ENCODE measurements at regions of chr10 and their contacts with region 1.

Region 1: DNA sequence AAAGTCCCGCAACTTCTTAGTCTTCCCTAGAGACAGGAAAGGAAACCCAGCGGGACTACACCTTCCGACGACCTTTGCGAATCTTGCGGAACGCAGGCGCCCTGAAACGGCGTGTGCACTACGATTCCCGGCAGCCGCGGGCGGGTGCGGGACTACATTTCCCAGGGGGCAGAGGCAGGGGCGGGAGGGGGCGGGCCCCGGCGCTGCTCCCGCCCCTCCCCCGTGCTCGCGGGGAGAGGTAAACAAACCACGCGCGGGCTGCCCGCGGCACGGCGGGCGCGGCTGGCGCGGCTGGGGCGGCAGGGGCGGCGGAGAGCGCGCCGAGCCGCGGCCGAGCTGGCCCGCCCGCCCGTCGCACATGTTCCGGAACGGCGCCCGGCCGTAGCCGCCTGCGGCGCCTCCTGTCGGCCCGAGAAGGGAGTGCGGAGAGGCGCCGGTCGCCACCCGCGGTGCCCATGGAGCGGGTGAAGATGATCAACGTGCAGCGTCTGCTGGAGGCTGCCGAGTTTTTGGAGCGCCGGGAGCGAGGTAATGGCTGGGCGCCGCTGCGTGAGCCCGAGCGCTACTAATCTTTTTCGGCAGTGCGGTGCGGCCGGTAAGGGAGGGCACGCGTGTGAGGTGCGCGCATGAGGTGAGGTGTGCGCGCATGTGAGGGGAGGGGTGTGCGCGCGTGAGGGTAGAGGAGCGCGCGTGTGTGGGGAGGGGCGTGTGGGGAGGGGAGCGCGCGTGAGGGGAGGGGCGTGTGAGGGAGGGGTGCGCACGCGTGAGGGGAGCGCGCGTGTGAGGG is 18.5 kb downstream of the MXI1 start:
- DNase-seq: peak; percentile 79 to 95
- ATAC-seq: peak; percentile 70 to 87 (median 77)
- H3K4me3 ChIP-seq: peak overlapping the region; percentile 66
- H3K4me3 Mint-ChIP-seq: peak overlapping the region; percentile 96
- H3K27ac ChIP-seq: peak overlapping the region; percentile 60
- H3K27ac Mint-ChIP-seq: peak overlapping the region; percentile 84
- H3K4me1 ChIP-seq: peaks cover 16% of the 10 kb centered on the region
- H3K4me1 Mint-ChIP-seq: peaks cover 25 to 31% of the 10 kb centered on the region in 2 donors
- H3K27me3 ChIP-seq: peaks cover 6% of the 10 kb centered on the region
- H3K27me3 Mint-ChIP-seq: peaks cover 22 to 33% of the 10 kb centered on the region in 2 donors
- CTCF ChIP-seq: peak; percentile 51

Region 2: DNA sequence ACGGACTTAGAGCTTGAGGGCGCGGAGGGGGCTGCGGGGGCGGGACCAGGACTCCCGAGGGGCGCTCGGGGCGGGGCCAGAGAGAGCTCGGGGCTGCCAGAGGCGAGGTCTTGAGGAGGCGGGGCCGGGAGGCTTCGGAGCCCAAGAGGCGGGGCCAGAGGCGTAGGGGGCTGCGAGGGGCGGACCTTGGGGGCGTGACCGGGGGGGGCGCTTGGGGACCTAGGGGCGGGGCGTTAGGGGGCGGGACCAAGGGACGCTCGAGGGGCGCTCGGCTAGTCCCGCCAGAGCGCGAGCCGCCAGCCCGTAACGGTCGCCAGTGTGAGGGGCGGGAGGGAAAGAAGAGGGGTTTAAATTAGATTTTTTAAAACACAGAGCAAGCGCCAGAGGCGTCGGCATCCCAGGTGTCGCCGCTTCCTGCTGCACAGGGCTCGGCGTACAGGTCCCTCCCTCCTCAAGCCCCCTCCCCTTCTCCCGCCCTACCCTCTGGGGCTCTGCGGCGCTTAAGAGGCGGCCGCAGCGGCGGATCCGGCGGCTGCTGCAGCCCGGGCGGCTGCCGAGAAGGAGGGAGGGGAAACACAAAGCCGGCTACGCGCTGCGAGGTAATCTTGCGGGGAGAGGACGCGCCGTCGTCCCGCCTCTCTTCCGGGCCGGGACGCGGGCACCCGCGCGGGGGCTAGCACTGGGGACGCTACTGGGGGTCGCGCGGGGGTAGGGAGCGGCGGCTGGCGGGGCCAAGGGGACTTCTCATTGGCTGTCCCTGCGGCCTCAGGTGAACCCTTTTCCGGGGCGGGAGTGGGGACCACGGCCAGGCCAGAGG is 218.0 kb before region 1 on chr10 and contains the start of gene ADD3:
- intact Hi-C with region 1: loop called (anchors 10 kb)
- DNase-seq: peak; percentile 89 to 96
- ATAC-seq: peak; percentile 79 to 93 (median 79)
- H3K4me3 ChIP-seq: peak within 1 kb of the TSS; percentile 85
- H3K4me3 Mint-ChIP-seq: no peak within 1 kb of the TSS
- H3K27ac ChIP-seq: peak within 1 kb of the TSS; percentile 78
- H3K27ac Mint-ChIP-seq: peak within 1 kb of the TSS in 1 of 2 donors; percentile 97
- H3K4me1 ChIP-seq: peaks cover 19% of the 10 kb centered on the region
- H3K4me1 Mint-ChIP-seq: peaks cover 41 to 42% of the 10 kb centered on the region in 2 donors
- H3K27me3 ChIP-seq: no peaks in the 10 kb centered on the region
- H3K27me3 Mint-ChIP-seq: no peaks in the 10 kb centered on the region
- CTCF ChIP-seq: no peak
- total RNA-seq, gene ADD3: 341 to 437 (median 344) TPM

Region 3: DNA sequence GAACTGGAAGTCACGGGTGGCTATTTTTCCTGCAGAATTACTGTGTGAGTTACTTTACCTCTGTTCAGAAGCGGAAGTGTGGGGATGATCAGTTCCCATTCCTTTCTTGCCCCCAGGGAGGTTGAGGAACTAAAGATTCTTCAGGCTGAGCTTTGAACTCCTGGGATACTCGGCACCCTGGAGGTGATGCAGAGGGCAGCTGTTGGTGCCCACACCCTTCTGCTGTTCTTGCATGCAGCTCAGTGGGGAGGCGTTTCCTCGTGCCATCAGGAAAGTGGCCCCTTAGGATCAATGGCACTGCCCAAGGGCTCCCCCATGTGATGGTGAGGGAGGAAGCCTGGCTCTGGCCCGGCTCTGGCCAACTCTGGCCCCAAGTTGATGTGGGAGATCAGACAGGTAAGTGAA is 63.2 kb before region 1 on chr10:
- intact Hi-C with region 1: loop called (anchors 5 kb)
- DNase-seq: no peak
- ATAC-seq: no peak
- H3K4me3 ChIP-seq: no peak overlapping the region
- H3K4me3 Mint-ChIP-seq: no peak overlapping the region
- H3K27ac ChIP-seq: no peak overlapping the region
- H3K27ac Mint-ChIP-seq: no peak overlapping the region
- H3K4me1 ChIP-seq: peaks cover 13% of the 10 kb centered on the region
- H3K4me1 Mint-ChIP-seq: peaks cover 10 to 11% of the 10 kb centered on the region in 2 donors
- H3K27me3 ChIP-seq: peaks cover 79% of the 10 kb centered on the region
- H3K27me3 Mint-ChIP-seq: peaks cover 59 to 72% of the 10 kb centered on the region in 2 donors
- CTCF ChIP-seq: no peak

Region 4: GRCh38 chr10:110210674-110211464 is 15.1 kb before region 1 on chr10:
- intact Hi-C with region 1: loop called (anchors 1 kb)
- DNase-seq: peak; percentile 88 to 95
- ATAC-seq: peak; percentile 73 to 81 (median 78)
- H3K4me3 ChIP-seq: peak overlapping the region; percentile 57
- H3K4me3 Mint-ChIP-seq: peak overlapping the region; percentile 96
- H3K27ac ChIP-seq: peak overlapping the region; percentile 71
- H3K27ac Mint-ChIP-seq: peak overlapping the region; percentile 63 to 86
- H3K4me1 ChIP-seq: peaks cover 48% of the 10 kb centered on the region
- H3K4me1 Mint-ChIP-seq: peaks cover 54 to 61% of the 10 kb centered on the region in 2 donors
- H3K27me3 ChIP-seq: peaks cover 30% of the 10 kb centered on the region
- H3K27me3 Mint-ChIP-seq: peaks cover 58 to 75% of the 10 kb centered on the region in 2 donors
- CTCF ChIP-seq: no peak

Region 5: GRCh38 chr10:110260746-110261477 is 35.0 kb after region 1 on chr10:
- intact Hi-C with region 1: loop called (anchors 5 kb)
- DNase-seq: no peak
- ATAC-seq: no peak
- H3K4me3 ChIP-seq: no peak overlapping the region
- H3K4me3 Mint-ChIP-seq: no peak overlapping the region
- H3K27ac ChIP-seq: no peak overlapping the region
- H3K27ac Mint-ChIP-seq: no peak overlapping the region
- H3K4me1 ChIP-seq: no peaks in the 10 kb centered on the region
- H3K4me1 Mint-ChIP-seq: no peaks in the 10 kb centered on the region
- H3K27me3 ChIP-seq: no peaks in the 10 kb centered on the region
- H3K27me3 Mint-ChIP-seq: peaks cover 17 to 47% of the 10 kb centered on the region in 2 donors
- CTCF ChIP-seq: no peak

Region 6: DNA sequence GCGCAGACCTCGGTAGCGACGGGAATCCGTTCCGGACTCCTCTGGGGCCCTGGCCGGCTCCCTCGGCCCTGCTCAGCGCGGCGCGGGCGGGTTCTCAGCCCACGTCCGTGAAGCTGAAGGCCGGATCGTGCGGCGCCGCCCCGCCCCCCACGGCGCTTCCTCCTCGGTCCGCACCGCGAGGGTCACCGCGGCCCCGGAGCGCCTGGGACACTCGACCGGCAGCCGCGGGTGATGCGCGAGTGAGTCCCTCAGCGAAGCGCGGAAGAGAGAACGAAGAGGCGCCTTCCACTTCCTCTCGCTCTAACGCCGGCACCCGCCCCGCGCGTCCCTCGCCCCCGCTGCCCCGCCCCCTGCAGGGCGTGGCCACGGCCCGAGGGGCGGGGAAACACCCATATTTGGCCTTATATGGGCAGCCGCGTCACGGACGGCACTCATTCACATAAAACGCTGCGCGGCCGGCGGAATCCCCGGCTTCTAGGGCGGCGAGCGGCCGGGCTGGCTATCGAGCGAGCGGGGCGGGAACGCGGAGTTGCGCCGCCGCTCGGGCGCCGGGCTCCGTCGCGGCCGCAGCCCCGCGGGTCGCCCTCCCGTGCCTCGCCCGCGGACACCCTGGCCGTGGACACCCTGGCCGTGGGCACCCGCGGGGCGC is 271.6 kb after region 1 on chr10 and contains the start of gene DUSP5:
- intact Hi-C with region 1: loop called (anchors 5 kb)
- DNase-seq: peak; percentile 98 to 99
- ATAC-seq: peak; percentile 88 to 97 (median 89)
- H3K4me3 ChIP-seq: peak within 1 kb of the TSS; percentile 66
- H3K4me3 Mint-ChIP-seq: peak within 1 kb of the TSS; percentile 97
- H3K27ac ChIP-seq: peak within 1 kb of the TSS; percentile 72
- H3K27ac Mint-ChIP-seq: peak within 1 kb of the TSS; percentile 96
- H3K4me1 ChIP-seq: peaks cover 53% of the 10 kb centered on the region
- H3K4me1 Mint-ChIP-seq: peaks cover 59 to 72% of the 10 kb centered on the region in 2 donors
- H3K27me3 ChIP-seq: no peaks in the 10 kb centered on the region
- H3K27me3 Mint-ChIP-seq: no peaks in the 10 kb centered on the region
- CTCF ChIP-seq: no peak
- total RNA-seq, gene DUSP5: 56.3 to 98.9 (median 69.6) TPM

Measured in natural killer cell (primary cell).